Ascending aorta (tissue), 2 donors: ENCODE measurements at regions of chr1 and their contacts with region 1.

Region 1: DNA sequence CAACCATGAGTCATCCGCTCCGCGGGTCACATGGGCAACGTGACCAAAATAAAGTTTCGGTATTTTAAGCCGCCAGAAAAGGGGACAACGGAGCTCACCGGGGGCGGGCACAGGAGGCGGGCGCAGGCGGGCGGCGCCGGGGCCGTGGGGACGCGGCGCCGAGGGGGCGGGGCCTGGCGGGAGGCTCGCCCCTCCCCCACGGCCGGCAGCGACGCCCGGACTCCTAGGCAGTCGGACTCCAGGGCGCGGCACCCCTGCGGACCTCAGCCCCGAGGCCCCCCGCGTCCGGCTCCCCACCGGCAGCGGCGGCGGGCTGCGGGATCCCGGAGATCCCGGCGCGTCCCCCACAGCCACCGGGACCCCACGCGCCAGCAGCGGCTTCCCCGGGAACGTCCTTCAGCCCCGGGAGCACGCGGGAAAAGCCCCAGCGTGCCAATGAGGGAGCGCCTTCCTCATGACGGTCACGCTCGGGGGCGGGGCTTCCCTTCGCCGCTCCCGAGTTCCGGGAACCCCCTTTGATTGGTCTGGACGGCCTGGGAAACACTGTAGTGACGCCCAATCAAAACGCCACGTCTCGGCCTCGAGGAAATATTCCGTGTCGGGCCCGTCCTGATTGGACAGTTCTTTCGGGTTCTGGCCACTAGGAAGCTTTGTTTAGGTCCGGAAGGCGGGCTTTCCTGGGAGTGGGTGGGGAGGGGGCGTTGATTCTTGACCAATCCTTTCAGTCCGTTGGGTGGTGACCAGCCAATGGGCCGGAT is 515 bp upstream of the CAMTA1 start:
- DNase-seq: peak; percentile 100
- H3K4me3 ChIP-seq: peak overlapping the region; percentile 89 to 98
- H3K27ac ChIP-seq: peak overlapping the region; percentile 99 to 100
- H3K4me1 ChIP-seq: peaks cover 4 to 21% of the 10 kb centered on the region in 2 donors
- H3K27me3 ChIP-seq: no peaks in the 10 kb centered on the region
- CTCF ChIP-seq: no peak

Region 2: GRCh38 chr1:6602669-6603237 is 182.0 kb before region 1 on chr1 and contains the start of gene KLHL21:
- intact Hi-C with region 1: loop called (anchors 2 kb)
- DNase-seq: peak; percentile 77 to 96
- H3K4me3 ChIP-seq: peak within 1 kb of the TSS; percentile 92 to 95
- H3K27ac ChIP-seq: peak within 1 kb of the TSS; percentile 98 to 99
- H3K4me1 ChIP-seq: peaks cover 20 to 36% of the 10 kb centered on the region in 2 donors
- H3K27me3 ChIP-seq: no peaks in the 10 kb centered on the region
- CTCF ChIP-seq: no peak
- total RNA-seq, gene KLHL21: 147 TPM

Region 3: DNA sequence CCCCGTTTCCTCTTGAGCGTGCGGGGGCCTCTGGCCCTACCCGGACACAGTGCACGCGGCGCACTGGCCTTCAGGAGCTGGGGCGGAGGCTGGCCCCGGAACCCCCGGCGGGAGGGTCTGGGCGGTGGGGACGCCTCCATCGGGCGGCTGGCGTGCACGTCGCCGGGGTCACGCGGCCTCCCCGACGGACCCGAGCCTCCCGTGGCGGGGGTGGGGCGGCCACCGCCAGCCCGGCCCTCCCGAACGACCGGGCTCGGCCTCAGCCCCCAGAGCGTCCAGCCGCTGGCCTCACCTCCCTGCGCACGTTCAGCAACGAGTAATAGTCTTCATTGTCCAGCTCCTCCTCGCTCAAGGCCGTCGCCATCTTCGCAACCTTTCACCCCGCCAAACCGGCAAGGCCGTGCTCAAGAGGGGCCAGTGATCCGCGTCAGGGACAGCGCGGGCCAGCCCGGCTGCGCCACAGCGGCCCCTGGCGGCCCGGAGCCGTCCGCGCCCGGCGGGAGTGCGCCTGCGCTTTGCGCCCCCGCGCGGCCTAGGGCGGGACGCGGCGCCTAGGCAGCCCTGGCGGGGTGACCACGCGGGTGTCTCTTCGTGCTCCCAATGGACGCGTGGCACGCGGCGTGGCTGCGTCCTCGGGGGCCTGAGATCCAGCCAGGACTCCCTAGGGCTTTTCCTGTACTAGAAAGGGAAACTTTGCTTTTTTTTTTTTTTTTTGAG is 83.1 kb before region 1 on chr1 and contains the start of gene DNAJC11:
- intact Hi-C with region 1: loop called (anchors 5 kb)
- DNase-seq: peak; percentile 30 to 92
- H3K4me3 ChIP-seq: peak within 1 kb of the TSS; percentile 90 to 96
- H3K27ac ChIP-seq: peak within 1 kb of the TSS; percentile 55 to 77
- H3K4me1 ChIP-seq: peaks cover 12 to 15% of the 10 kb centered on the region in 2 donors
- H3K27me3 ChIP-seq: no peaks in the 10 kb centered on the region
- CTCF ChIP-seq: peak; percentile 47 to 100 (median 54)
- total RNA-seq, gene DNAJC11: 12.9 TPM

Region 4: DNA sequence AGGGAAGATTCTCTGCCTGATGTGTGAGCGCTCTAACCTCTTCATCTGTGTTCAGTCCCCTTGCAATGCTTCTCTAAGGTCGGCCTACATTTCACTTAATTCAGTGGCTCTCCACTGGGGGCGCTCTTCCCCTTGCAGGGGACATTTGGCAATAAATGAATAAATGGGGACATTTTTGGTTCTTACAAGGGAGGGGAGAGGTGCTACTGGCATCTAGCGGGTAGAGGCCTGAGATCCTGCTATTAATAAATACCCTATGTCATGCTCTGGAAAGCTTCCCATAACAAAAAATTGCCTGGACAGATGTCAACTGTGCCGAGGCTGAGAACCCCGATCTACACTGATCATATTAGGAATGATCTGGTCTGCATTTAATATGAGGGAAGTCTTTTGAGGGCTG is 57.2 kb before region 1 on chr1:
- intact Hi-C with region 1: loop called (anchors 2 kb)
- DNase-seq: peak in 1 of 2 donors; percentile 84
- H3K4me3 ChIP-seq: no peak overlapping the region
- H3K27ac ChIP-seq: peak overlapping the region in 1 of 2 donors; percentile 19
- H3K4me1 ChIP-seq: peaks cover 0 to 2% of the 10 kb centered on the region in 2 donors
- H3K27me3 ChIP-seq: no peaks in the 10 kb centered on the region
- CTCF ChIP-seq: peak; percentile 73 to 92 (median 90)

Region 5: DNA sequence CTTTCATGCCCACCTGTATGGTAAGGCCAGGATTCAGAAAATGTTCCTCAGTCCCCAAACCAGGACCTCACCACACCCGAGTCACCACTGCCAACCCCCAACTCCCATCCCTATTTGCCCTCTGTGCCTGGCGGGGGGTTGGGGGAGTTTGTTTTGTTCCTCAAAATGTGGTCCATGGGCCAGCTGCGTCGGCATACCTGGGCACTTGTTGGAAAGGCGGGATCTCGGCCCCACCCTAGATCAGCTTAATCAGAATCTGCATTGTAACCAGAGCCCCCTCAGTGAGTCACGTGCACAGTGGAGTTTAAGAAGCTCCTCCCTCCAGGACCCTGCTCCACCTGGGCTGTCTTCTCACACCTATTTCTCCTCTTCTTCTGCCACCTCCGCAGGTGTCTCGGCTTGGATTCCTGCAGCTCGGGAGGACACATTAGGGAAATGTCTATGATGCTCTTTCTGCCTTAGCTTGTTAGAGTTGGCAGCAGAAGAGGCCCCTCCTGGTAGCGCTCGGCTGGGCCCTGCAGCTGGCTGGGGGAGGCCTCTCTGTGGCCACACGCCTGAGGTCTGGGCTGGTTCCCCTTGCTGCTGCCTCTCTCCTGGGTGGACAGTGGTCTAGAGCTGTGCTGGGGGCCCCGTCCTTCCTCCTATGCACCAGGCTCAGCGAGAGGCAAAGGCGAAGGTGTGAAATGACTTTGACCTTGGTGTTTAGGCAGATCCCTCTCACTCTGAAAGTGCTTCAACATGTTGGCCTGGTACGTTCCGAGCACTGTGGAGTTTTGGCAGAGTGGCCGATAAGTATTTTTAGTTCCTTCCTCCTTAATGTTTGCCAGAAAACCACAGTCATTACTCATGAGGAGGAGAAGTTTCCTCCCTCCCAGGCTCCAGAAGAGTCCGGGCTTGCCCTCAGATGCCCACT is 41.3 kb before region 1 on chr1:
- intact Hi-C with region 1: loop called (anchors 1 kb)
- DNase-seq: peak; percentile 9 to 84
- H3K4me3 ChIP-seq: peak overlapping the region in 1 of 2 donors; percentile 43
- H3K27ac ChIP-seq: peak overlapping the region; percentile 90 to 93
- H3K4me1 ChIP-seq: peaks cover 6 to 11% of the 10 kb centered on the region in 2 donors
- H3K27me3 ChIP-seq: no peaks in the 10 kb centered on the region
- CTCF ChIP-seq: no peak

Region 6: GRCh38 chr1:6859415-6860343 is 74.9 kb after region 1 on chr1:
- intact Hi-C with region 1: loop called (anchors 1 kb)
- DNase-seq: no peak
- H3K4me3 ChIP-seq: peak overlapping the region in 1 of 2 donors; percentile 18
- H3K27ac ChIP-seq: peak overlapping the region; percentile 80 to 84
- H3K4me1 ChIP-seq: peaks cover 4 to 21% of the 10 kb centered on the region in 2 donors
- H3K27me3 ChIP-seq: no peaks in the 10 kb centered on the region
- CTCF ChIP-seq: no peak

Region 7: GRCh38 chr1:6922096-6922931 is 137.6 kb after region 1 on chr1:
- intact Hi-C with region 1: loop called (anchors 5 kb)
- DNase-seq: peak; percentile 48 to 91
- H3K4me3 ChIP-seq: no peak overlapping the region
- H3K27ac ChIP-seq: peak overlapping the region; percentile 39 to 87
- H3K4me1 ChIP-seq: peaks cover 13 to 32% of the 10 kb centered on the region in 2 donors
- H3K27me3 ChIP-seq: no peaks in the 10 kb centered on the region
- CTCF ChIP-seq: no peak